ENCODE measurements at regions of chr17 and their contacts with region 1.

Region 1: DNA sequence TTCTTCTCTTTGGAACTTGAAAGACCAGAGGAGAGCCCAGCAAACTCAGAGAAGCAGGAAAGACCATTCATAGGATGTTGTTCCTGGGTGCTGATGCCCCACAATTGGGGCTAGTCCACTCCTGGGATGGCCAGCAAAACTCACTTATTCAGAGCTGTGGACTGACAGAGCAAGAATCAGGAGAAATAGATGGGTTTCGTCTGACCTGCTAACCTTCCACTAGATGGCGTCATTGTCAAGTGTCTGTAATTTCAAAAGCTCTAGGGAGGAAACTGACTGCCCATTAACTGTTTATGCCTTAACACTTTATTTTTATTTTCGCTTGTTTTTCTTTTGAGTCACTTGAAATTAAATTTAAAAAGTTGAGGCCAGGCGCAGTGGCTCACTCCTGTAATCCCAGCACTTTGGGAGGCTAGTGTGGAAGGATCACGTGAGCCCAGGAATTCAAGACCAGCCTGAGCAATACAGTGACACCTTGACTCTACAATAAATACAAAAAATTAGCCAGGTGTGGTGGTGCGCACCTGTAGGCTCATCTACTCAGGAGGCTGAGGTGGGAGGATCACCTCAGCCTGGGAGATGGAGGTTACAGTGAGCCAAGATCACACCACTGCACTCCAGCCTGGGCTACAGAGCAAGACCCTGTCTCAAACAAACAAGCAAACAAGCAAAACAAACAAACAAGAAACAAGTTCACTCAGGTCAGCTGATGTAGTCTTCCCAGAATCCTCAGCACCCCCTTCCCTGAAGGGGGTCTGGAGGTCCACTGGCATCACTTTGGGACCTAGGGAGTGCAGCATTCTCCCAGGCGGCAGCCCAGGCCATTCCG is 28.6 kb upstream of the MILR1 start:
- DNase-seq: peak; percentile 67
- H3K4me3 Mint-ChIP-seq: no peak overlapping the region
- H3K27ac Mint-ChIP-seq: no peak overlapping the region
- H3K4me1 Mint-ChIP-seq: peaks cover 6% of the 10 kb centered on the region
- H3K27me3 Mint-ChIP-seq: peaks cover 7% of the 10 kb centered on the region

Region 2: DNA sequence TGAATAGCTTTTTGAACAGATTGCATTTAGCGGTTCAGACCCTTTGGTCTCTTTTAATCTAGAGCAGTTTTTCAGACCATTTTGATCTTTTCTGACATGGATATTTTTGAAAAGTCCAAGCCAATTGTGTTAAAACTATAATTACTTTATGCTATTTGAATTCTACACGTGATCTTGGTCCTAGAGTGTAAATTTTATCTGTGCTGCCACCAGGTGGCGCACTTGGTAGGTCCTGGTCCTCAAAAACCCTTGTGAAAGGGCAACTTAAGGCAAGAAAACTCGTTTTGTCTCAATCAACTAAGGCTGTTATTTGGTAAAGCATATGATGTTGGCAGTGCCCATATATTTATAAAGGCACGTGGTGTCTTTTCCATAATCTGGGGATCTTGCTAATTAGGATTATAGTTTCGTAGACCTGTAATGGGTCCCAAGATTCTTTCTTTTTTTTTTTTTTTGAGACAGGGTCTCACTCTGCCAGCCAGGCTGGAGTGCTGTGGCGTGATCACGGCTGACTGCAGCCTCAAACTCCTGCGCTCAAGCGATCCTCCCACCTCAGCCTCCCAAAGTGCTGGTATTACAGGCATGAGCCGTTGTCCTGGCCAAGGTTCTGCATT is 113.4 kb before region 1 on chr17:
- CTCF ChIA-PET with region 1: interaction called, 16 read pairs
- POLR2A ChIA-PET with region 1: no interaction called
- DNase-seq: peak; percentile 74
- H3K4me3 Mint-ChIP-seq: no peak overlapping the region
- H3K27ac Mint-ChIP-seq: no peak overlapping the region
- H3K4me1 Mint-ChIP-seq: peaks cover 1% of the 10 kb centered on the region
- H3K27me3 Mint-ChIP-seq: no peaks in the 10 kb centered on the region

Region 3: GRCh38 chr17:64384253-64385186 is 35.8 kb before region 1 on chr17:
- CTCF ChIA-PET with region 1: no interaction called
- POLR2A ChIA-PET with region 1: no interaction called
- DNase-seq: no peak
- H3K4me3 Mint-ChIP-seq: no peak overlapping the region
- H3K27ac Mint-ChIP-seq: no peak overlapping the region
- H3K4me1 Mint-ChIP-seq: peaks cover 27% of the 10 kb centered on the region
- H3K27me3 Mint-ChIP-seq: no peaks in the 10 kb centered on the region

Region 4: GRCh38 chr17:64406321-64407200 is 13.8 kb before region 1 on chr17:
- CTCF ChIA-PET with region 1: interaction called, 26 read pairs
- POLR2A ChIA-PET with region 1: no interaction called
- DNase-seq: no peak
- H3K4me3 Mint-ChIP-seq: no peak overlapping the region
- H3K27ac Mint-ChIP-seq: no peak overlapping the region
- H3K4me1 Mint-ChIP-seq: peaks cover 9% of the 10 kb centered on the region
- H3K27me3 Mint-ChIP-seq: no peaks in the 10 kb centered on the region

Region 5: DNA sequence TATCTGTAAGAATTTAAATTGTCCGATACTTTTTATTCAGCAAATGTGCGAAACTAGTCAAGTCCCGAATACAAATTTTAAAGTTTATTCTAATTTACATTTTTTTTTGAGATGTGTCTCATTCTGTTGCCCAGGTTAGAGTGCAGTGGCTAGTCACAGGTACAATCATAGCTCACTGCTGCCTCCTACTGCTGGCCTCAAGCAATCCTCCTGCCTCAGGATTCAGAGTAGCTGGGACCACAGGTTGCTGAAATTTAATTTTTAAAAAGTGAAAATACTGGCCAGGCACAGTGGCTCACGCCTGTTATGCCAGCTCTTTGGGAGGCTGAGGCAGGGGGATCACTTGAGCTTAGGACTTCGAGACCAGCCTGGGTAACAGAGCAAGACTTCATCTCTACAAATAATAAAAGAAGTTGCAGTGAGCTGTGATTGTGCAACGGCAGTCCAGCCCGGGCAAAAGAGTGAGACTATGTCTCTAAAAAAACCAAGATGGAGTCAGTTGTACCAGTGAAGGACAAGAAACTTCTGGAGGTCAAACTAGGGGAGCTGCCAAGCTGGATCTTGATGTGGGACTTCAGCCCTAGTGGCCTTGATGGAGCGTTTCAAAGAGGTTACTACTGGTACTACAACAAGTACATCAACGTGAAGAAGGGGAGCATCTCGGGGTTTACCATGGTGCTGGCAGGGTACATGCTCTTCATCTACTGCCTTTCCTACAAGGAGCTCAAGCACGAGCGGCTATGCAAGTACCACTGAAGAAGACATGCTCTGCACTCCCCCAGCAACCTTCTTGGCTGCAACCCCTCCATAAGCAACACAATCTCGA is 70.9 kb after region 1 on chr17:
- CTCF ChIA-PET with region 1: interaction called, 73 read pairs
- POLR2A ChIA-PET with region 1: interaction called, 4 read pairs
- DNase-seq: peak; percentile 75
- H3K4me3 Mint-ChIP-seq: no peak overlapping the region
- H3K27ac Mint-ChIP-seq: no peak overlapping the region
- H3K4me1 Mint-ChIP-seq: peaks cover 37% of the 10 kb centered on the region
- H3K27me3 Mint-ChIP-seq: no peaks in the 10 kb centered on the region

Region 6: GRCh38 chr17:64496786-64497564 is 76.6 kb after region 1 on chr17 and contains the start of gene POLG2:
- CTCF ChIA-PET with region 1: interaction called, 73 read pairs
- POLR2A ChIA-PET with region 1: interaction called, 4 read pairs
- DNase-seq: peak; percentile 96
- H3K4me3 Mint-ChIP-seq: peak within 1 kb of the TSS; percentile 99
- H3K27ac Mint-ChIP-seq: peak within 1 kb of the TSS; percentile 98
- H3K4me1 Mint-ChIP-seq: peaks cover 75% of the 10 kb centered on the region
- H3K27me3 Mint-ChIP-seq: no peaks in the 10 kb centered on the region
- total RNA-seq, gene POLG2: 36.6 to 37.5 TPM

Measured in activated CD4-positive, alpha-beta T cell treated with anti-CD3 and anti-CD28 coated beads, Interleukin-2, amount 10 ng/mL, durations not matched to agents 7 days and 5 days (primary cell).